Right cardiac atrium (tissue), 5 donors: ENCODE measurements at regions of chr9 and their contacts with region 1.

Region 1: DNA sequence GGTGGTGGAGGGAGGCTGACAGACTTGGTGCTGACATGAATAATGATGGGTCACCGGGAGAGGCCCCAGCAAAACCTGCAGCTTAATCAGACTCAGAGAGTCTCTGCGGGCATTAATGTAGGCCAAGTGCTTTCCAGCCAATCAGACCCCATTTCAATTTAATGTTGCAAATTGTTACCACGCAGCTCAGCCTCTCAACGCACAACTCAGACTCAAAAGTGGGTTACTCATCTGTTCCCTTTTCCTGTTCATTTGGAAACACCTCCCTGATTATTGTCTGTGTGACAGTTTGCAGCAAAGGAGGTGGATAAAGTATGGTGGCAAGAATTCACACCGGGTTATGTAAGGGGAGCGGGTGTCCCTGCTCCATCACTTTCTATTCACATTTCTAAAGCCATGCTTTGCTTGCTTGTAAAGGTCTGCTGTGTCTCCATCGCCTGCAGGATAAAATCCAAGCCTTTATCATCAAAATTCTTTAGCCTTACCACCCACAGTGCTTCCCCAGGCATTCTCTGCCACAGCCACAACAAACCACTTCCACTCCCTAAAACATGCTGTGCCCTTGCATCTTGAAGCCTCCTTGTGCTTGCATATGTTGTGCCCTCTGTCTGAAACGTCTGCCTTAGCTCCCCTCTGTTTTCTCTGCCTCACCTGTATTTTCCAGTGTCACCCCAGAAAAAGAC is 156.5 kb downstream of the ASTN2 start:
- DNase-seq: no peak
- ATAC-seq: no peak
- H3K4me3 ChIP-seq: no peak overlapping the region
- H3K27ac ChIP-seq: no peak overlapping the region
- H3K4me1 ChIP-seq: no peaks in the 10 kb centered on the region
- H3K27me3 ChIP-seq: no peaks in the 10 kb centered on the region

Region 2: DNA sequence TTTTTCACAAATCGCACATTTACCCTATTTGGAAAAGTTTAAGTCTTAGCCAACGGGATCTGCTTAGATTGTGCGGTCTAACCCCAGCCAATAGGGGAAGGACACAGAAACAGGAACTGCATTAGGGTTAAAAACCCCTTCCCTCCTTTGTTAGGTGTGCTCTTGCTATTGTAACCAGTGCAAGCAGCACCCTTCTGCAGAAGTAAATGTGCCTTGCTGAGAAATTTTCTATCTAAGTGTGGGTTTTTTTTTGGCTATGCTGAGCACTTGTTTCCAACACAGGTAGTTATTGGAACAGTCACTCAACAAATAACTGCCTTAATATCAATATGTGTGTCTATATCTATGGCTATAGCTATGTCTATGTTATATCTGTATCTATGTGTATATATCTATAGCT is 381.3 kb before region 1 on chr9:
- intact Hi-C with region 1: no loop called
- DNase-seq: no peak
- ATAC-seq: no peak
- H3K4me3 ChIP-seq: no peak overlapping the region
- H3K27ac ChIP-seq: no peak overlapping the region
- H3K4me1 ChIP-seq: no peaks in the 10 kb centered on the region
- H3K27me3 ChIP-seq: no peaks in the 10 kb centered on the region

Region 3: DNA sequence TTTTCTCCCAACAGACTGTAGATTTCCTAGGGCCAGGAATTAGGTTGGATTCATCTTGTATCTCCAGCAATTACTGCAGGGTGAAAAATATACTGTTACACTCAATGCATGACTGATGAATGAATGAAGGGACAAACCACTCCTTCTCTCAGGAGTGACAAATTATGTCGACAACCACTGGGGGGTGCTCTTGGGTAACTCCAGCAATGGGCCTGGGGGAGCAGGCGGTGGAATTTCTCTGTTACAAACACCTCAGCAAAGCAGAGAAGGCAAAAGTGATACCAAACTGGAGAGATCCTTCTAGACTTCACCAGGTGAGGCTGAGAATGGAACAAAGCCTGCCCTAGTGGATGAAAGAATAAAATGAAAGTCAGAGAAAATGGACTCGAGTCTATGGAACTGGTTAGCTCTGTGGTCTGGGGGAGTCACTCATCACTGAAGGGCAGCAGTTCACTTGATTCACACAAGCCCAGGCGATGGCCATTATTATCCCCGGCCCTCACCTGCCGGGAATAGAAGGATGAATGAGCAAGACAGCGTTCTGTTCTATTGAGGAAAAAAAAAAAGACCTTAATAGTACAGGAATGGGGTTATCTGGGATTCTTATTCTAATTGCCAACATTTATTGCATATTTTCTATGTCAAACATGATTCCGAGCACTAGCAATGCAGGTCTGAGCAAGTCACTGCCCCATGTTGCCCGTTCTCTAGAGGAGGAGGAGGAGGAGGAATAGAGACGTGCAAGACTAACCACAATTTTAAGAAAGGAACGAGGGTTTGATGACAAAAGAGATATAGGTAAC is 184.6 kb before region 1 on chr9:
- intact Hi-C with region 1: loop called in 1 of 4 experiments (anchors 10 kb)
- DNase-seq: peak in 1 of 3 donors; percentile 53
- ATAC-seq: peak in 1 of 2 donors; percentile 43
- H3K4me3 ChIP-seq: no peak overlapping the region
- H3K27ac ChIP-seq: no peak overlapping the region
- H3K4me1 ChIP-seq: no peaks in the 10 kb centered on the region
- H3K27me3 ChIP-seq: no peaks in the 10 kb centered on the region